B cell (primary cell): ENCODE measurements at regions of chr10 and their contacts with region 1.

Region 1: GRCh38 chr10:128064108-128064969 is 61.9 kb downstream of the MKI67 start:
- DNase-seq: peak; percentile 92
- ATAC-seq: peak; percentile 74
- H3K4me3 ChIP-seq: peak overlapping the region; percentile 3 to 48 (median 31)
- H3K4me3 Mint-ChIP-seq: peak overlapping the region; percentile 75
- H3K27ac ChIP-seq: peak overlapping the region; percentile 86 to 89
- H3K27ac Mint-ChIP-seq: peak overlapping the region; percentile 85
- H3K4me1 ChIP-seq: peaks cover 47 to 65% of the 10 kb centered on the region in 2 donors
- H3K4me1 Mint-ChIP-seq: peaks cover 75% of the 10 kb centered on the region
- H3K27me3 ChIP-seq: no peaks in the 10 kb centered on the region
- H3K27me3 Mint-ChIP-seq: no peaks in the 10 kb centered on the region
- CTCF ChIP-seq: no peak

Region 2: DNA sequence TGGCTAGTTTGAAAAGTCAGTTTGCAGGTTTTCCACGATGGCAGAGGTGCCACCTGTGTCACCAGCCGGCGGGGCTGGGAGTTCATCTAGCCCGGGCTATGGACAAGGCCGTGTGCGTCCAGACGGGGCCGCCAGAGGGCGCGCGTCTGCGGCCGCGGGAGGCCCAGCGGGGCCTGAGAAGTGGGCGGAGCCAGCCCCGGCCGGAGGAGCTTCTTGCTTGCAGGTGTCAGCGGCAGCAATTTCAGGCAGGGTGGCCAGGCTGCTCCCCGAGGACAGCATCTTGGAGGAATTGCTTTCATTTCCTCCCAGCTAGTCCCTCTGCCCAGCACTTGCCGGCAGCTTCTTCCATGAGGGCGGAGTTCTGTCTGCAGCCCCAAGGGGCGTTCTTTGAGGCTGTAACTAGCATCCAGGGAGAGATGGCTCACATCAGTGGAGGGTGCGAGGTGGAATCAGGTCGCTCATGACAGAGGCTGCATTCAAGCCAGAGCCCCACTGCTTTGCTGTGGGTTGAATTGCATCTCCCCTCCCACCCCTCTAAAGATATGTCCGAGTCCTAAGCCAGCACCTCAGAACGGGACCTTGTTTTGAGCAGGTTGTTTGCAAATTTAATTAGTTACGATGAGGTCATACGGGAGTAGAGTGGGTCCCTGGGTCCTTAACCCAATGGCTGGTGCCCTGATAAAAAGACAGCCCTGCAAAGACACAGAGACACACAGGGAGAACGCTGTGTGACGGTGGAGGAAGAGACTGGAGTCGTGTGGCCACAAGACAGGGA is 147.8 kb after region 1 on chr10:
- CTCF ChIA-PET with region 1: interaction called, 4 read pairs
- POLR2A ChIA-PET with region 1: no interaction called
- intact Hi-C with region 1: loop called (anchors 5 kb)
- DNase-seq: peak; percentile 89
- ATAC-seq: peak; percentile 87
- H3K4me3 ChIP-seq: no peak overlapping the region
- H3K4me3 Mint-ChIP-seq: peak overlapping the region; percentile 82
- H3K27ac ChIP-seq: no peak overlapping the region
- H3K27ac Mint-ChIP-seq: peak overlapping the region; percentile 78
- H3K4me1 ChIP-seq: peaks cover 8 to 12% of the 10 kb centered on the region in 2 donors
- H3K4me1 Mint-ChIP-seq: peaks cover 12% of the 10 kb centered on the region
- H3K27me3 ChIP-seq: peaks cover 0 to 13% (median 0%) of the 10 kb centered on the region in 4 experiments
- H3K27me3 Mint-ChIP-seq: peaks cover 23% of the 10 kb centered on the region
- CTCF ChIP-seq: peak; percentile 89